Thyroid gland (tissue), 4 donors: ENCODE measurements at regions of chr5 and their contacts with region 1.

Region 1: DNA sequence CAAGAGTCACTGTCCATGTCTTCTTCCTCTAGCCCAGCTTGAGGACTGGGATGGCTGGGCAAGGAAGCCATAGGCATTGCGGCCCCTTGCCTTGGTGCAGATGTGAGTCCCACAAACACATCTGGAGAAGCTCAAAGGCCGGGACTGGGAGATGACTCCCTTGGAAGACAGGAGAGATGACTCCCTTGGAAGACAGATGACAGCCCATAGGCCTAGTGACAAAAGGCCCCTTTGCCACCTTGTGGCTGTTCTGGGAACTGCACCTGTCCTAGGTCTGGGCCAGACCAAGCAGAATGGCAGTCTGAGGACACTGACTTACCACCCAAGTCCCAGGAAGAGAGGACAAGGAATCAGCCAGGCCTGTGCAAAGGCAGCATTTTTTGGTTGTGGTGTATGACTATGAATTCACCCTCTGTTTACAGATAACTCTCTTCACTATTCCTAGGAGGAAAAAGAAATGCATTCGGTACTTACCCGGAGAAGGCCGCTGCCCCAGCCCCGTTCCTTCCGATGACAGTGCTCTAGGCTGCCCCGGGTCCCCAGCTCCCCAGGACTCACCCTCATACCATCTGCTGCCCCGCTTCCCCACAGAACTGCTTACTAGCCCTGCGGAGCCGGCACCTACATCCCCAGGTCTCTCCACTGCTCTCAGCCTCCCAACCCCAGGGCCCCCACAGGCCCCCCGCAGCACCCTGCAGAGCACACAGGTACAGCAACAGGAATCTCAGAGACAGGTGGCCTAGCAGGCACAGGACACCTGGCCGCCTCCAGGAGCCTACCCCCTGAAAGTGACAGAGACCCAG is 30.8 kb downstream of the SKP1 start:
- DNase-seq: peak; percentile 75 to 79
- H3K4me3 ChIP-seq: no peak overlapping the region
- H3K27ac ChIP-seq: no peak overlapping the region
- H3K4me1 ChIP-seq: peaks cover 13 to 19% of the 10 kb centered on the region in 2 donors
- H3K27me3 ChIP-seq: no peaks in the 10 kb centered on the region
- CTCF ChIP-seq: peak; percentile 75 to 98 (median 84)
- POLR2A ChIP-seq: no peak

Region 2: GRCh38 chr5:134101686-134102439 is 44.1 kb before region 1 on chr5:
- intact Hi-C with region 1: loop called (anchors 2 kb)
- DNase-seq: peak; percentile 44 to 52
- H3K4me3 ChIP-seq: no peak overlapping the region
- H3K27ac ChIP-seq: no peak overlapping the region
- H3K4me1 ChIP-seq: peaks cover 0 to 14% of the 10 kb centered on the region in 2 donors
- H3K27me3 ChIP-seq: no peaks in the 10 kb centered on the region
- CTCF ChIP-seq: peak; percentile 55 to 92 (median 82)
- POLR2A ChIP-seq: no peak